ENCODE measurements at regions of chr11 and their contacts with region 1.

Region 1: GRCh38 chr11:65071907-65072630 is 11.8 kb downstream of the CDCA5 start:
- DNase-seq: no peak
- ATAC-seq: peak; percentile 73
- H3K4me3 ChIP-seq: no peak overlapping the region
- H3K27ac ChIP-seq: peak overlapping the region; percentile 16; the same call in 1 of the 2 replicates
- H3K4me1 ChIP-seq: peaks cover 11% of the 10 kb centered on the region
- H3K27me3 ChIP-seq: no peaks in the 10 kb centered on the region
- CTCF ChIP-seq: no peak
- EP300 ChIP-seq: no peak
- POLR2A ChIP-seq: peak; percentile 41; the same call in 1 of the 2 replicates
- RAD21 ChIP-seq: no peak

Region 2: DNA sequence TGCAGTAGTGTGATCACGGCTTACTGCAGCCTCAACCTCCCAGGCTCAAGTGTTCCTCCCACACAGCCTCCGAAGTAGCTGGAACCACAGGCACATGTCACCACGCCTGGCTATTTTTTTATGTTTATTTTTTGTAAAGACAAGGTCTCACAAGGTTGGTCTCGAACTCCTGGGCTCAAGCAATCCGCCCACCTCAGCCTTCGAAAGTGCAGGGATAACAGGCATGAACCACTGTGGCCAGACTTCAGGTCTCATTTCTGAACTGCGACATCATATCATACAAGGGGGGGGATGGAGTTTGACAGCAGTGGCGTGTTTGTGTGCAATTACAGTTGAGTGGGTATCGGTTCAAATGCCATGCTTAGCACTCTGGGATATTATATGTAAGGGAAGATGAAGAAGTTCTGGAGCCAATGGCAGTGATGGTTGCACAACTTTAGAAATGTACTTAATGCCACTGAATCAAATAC is 20.6 kb before region 1 on chr11:
- CTCF ChIA-PET with region 1: interaction called, 5 read pairs
- POLR2A ChIA-PET with region 1: interaction called, 12 read pairs
- RAD21 ChIA-PET with region 1: no interaction called
- SMC1A ChIA-PET with region 1: interaction called, 8 read pairs
- in situ Hi-C with region 1: no loop called
- intact Hi-C with region 1: no loop called
- DNase-seq: no peak
- ATAC-seq: peak; percentile 53
- H3K4me3 ChIP-seq: no peak overlapping the region
- H3K27ac ChIP-seq: no peak overlapping the region
- H3K4me1 ChIP-seq: peaks cover 40% of the 10 kb centered on the region
- H3K27me3 ChIP-seq: no peaks in the 10 kb centered on the region
- CTCF ChIP-seq: no peak
- EP300 ChIP-seq: no peak
- POLR2A ChIP-seq: no peak
- RAD21 ChIP-seq: no peak

Measured in GM12878 (cell line).